Heart left ventricle (tissue), 16 donors: ENCODE measurements at regions of chr7 and their contacts with region 1.

Region 1: GRCh38 chr7:50610521-50611277 is 45.5 kb upstream of the DDC start:
- DNase-seq: no peak
- ATAC-seq: no peak
- H3K4me3 ChIP-seq: no peak overlapping the region
- H3K27ac ChIP-seq: peak overlapping the region in 1 of 12 donors; percentile 62
- H3K4me1 ChIP-seq: peaks cover 0 to 27% (median 0%) of the 10 kb centered on the region in 12 donors
- H3K27me3 ChIP-seq: no peaks in the 10 kb centered on the region
- CTCF ChIP-seq: no peak
- POLR2A ChIP-seq: no peak

Region 2: GRCh38 chr7:49927631-49928030 is 683.1 kb before region 1 on chr7:
- intact Hi-C with region 1: no loop called
- DNase-seq: no peak
- ATAC-seq: no peak
- H3K4me3 ChIP-seq: no peak overlapping the region
- H3K27ac ChIP-seq: no peak overlapping the region
- H3K4me1 ChIP-seq: peaks cover 0 to 7% (median 0%) of the 10 kb centered on the region in 12 donors
- H3K27me3 ChIP-seq: no peaks in the 10 kb centered on the region
- CTCF ChIP-seq: no peak
- POLR2A ChIP-seq: no peak

Region 3: GRCh38 chr7:50481867-50482266 is 128.8 kb before region 1 on chr7:
- intact Hi-C with region 1: loop called in 1 of 10 experiments (anchors 5 kb)
- DNase-seq: no peak
- ATAC-seq: no peak
- H3K4me3 ChIP-seq: no peak overlapping the region
- H3K27ac ChIP-seq: no peak overlapping the region
- H3K4me1 ChIP-seq: no peaks in the 10 kb centered on the region
- H3K27me3 ChIP-seq: no peaks in the 10 kb centered on the region
- CTCF ChIP-seq: no peak
- POLR2A ChIP-seq: no peak

Region 4: DNA sequence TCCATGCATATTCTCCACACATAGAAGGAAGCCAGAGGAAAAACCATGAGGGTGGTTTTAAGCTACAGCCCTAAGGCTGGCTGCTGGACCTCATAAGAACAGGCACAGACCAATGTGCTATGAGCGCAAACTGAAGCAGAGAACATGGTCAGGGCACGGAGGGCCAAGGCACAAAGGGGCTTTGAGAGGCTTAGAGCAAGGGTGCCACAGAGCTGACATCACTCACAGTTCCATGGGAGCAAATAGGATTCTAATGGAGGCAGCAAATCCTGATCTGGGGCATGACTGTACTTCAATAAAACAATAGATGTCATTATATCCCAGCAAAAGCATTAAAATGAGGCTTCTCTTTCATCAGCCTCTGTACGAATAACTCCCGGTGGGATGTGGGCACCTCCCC is 543.5 kb after region 1 on chr7:
- intact Hi-C with region 1: loop called in 6 of 10 experiments (anchors 10 kb)
- DNase-seq: no peak
- ATAC-seq: no peak
- H3K4me3 ChIP-seq: no peak overlapping the region
- H3K27ac ChIP-seq: no peak overlapping the region
- H3K4me1 ChIP-seq: peaks cover 0 to 9% (median 0%) of the 10 kb centered on the region in 12 donors
- H3K27me3 ChIP-seq: no peaks in the 10 kb centered on the region
- CTCF ChIP-seq: no peak
- POLR2A ChIP-seq: no peak